ENCODE measurements at regions of chr3 and their contacts with region 1.

Region 1: DNA sequence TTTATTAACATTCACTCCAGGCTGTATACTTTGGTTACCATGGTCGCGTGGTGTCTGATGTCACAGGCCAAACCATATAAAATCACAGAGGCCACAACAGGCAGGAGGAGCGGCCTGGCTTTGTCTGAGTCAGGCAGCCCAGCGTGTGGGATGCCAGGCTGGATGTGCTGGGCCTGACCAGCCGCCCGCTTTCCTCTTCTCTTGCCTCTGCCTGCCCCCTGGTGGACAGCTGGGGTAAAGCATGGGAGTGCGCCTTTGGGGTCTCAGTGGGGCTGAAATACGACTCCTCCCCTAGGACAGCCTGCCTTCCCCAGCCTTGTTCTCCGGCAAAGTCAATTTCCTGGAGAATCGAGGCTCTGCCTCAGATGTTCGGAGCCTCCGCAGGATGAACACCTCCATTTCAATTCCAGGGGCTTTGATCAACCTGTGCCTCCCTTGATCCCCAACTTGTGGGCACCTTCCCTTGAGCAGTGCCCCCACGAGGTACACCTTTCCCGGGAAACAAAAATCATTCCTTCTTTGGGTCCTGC is 78.2 kb downstream of the CCNL1 start:
- DNase-seq: peak; percentile 85 to 91
- H3K4me3 ChIP-seq: no peak overlapping the region
- H3K4me3 Mint-ChIP-seq: no peak overlapping the region
- H3K27ac Mint-ChIP-seq: peak overlapping the region; percentile 66
- H3K4me1 ChIP-seq: peaks cover 6% of the 10 kb centered on the region
- H3K4me1 Mint-ChIP-seq: peaks cover 11% of the 10 kb centered on the region
- H3K27me3 ChIP-seq: no peaks in the 10 kb centered on the region
- H3K27me3 Mint-ChIP-seq: no peaks in the 10 kb centered on the region
- CTCF ChIP-seq: peak; percentile 94

Region 2: DNA sequence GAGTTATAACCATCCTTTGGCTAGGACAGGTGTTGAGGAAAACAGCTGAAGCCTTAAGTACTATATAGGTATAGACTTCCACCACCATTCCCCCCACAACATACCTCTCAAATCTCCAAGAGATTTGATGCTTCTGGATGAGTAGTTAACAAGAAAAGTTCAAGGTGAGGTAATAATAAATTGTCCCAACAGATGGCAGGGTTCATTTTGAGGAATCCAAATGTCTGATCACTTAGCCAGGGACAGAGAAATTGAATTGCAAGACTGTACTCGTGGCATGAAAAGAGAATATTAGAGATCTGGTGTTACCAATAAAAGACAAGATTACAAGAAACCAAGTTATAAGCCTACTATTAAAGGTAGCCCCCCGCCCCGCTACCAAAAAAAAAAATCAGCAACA is 190.1 kb before region 1 on chr3:
- CTCF ChIA-PET with region 1: no interaction called
- POLR2A ChIA-PET with region 1: no interaction called
- intact Hi-C with region 1: loop called (anchors 1 kb)
- DNase-seq: no peak
- H3K4me3 ChIP-seq: no peak overlapping the region
- H3K4me3 Mint-ChIP-seq: no peak overlapping the region
- H3K27ac Mint-ChIP-seq: no peak overlapping the region
- H3K4me1 ChIP-seq: no peaks in the 10 kb centered on the region
- H3K4me1 Mint-ChIP-seq: no peaks in the 10 kb centered on the region
- H3K27me3 ChIP-seq: no peaks in the 10 kb centered on the region
- H3K27me3 Mint-ChIP-seq: no peaks in the 10 kb centered on the region
- CTCF ChIP-seq: peak in 1 of 2 experiments; percentile 23

Region 3: DNA sequence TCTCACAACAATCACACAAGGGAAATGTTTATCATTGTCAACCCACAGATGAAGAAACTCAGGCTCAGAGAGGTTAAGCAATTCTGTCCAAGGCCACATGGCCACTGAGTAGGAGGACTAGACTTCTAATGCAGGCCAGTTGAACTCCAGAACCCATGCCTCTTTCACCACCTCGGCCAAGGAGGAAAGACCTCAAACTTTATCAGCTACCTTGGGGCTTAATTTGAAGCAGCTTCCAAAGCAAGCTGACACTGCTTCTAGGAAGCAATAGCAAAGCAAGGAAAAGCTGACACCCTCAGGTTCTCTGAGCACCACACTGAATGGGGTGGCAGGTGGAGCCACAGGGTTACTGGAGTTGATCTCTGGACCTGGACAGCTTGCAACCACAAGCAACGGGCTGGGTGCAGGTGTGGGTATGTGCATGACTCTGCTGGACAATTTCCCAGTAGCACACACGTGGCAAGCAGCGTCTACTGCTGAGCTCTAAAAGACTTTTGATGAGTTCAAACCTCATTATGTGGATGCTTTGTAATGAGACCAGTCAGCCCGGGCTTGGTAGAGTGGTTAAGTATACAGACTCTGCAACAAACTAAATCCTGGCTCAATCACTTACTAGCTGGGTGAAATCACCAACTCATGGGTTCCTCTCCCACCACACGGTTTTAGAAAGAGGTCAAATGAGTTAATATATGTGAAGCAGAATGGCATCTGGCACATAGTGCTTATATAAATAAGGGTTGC is 55.1 kb after region 1 on chr3:
- CTCF ChIA-PET with region 1: interaction called, 8 read pairs
- POLR2A ChIA-PET with region 1: no interaction called
- intact Hi-C with region 1: loop called (anchors 1 kb)
- DNase-seq: no peak
- H3K4me3 ChIP-seq: no peak overlapping the region
- H3K4me3 Mint-ChIP-seq: no peak overlapping the region
- H3K27ac Mint-ChIP-seq: no peak overlapping the region
- H3K4me1 ChIP-seq: peaks cover 27% of the 10 kb centered on the region
- H3K4me1 Mint-ChIP-seq: no peaks in the 10 kb centered on the region
- H3K27me3 ChIP-seq: no peaks in the 10 kb centered on the region
- H3K27me3 Mint-ChIP-seq: no peaks in the 10 kb centered on the region
- CTCF ChIP-seq: no peak

Region 4: DNA sequence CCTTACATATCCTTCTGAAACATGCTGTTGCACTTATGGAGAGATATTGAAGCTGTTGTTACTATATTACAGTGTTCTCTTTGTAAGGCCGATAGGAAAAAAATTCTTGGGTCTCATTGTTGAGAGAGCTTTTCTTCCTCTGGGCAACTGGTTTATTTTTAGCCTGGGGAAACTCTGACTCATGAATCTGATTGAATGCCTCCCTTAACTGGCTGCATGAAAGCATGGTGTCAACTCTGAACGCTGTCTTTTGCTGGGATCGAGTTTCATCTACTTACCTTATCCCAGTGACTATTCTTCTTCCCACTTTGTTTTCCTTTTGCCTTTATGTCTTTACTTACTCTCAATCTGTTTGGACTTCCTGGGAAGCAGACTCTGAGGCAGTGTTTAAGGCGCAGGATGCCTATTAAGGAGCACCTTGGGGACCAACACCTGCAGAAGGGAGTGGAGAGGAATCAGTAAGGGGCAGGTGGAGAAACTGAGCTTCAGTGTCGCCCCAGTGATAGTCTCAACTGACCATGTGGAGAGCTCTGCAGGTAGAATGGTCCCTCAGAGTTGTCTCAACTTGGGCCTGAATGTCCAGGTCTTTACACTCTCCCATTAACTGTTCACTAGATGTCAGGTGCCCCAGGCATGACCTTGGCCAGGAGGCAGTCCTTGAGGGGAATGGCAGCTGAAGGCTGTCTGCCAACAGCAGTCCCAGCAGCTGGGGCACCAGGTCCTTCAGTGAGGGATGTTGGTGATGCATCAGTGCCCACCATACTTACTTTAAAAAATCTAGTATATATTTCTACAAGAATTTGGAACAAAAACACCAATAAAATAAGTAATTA is 167.1 kb after region 1 on chr3:
- CTCF ChIA-PET with region 1: no interaction called
- POLR2A ChIA-PET with region 1: no interaction called
- intact Hi-C with region 1: no loop called
- DNase-seq: no peak
- H3K4me3 ChIP-seq: no peak overlapping the region
- H3K4me3 Mint-ChIP-seq: no peak overlapping the region
- H3K27ac Mint-ChIP-seq: no peak overlapping the region
- H3K4me1 ChIP-seq: no peaks in the 10 kb centered on the region
- H3K4me1 Mint-ChIP-seq: no peaks in the 10 kb centered on the region
- H3K27me3 ChIP-seq: no peaks in the 10 kb centered on the region
- H3K27me3 Mint-ChIP-seq: peaks cover 16% of the 10 kb centered on the region
- CTCF ChIP-seq: no peak

Measured in Caco-2 (cell line).